Activated CD8-positive, alpha-beta memory T cell treated with anti-CD3 and anti-CD28 coated beads, Interleukin-2, amount 10 ng/mL, durations not matched to agents 7 days and 5 days (primary cell): ENCODE measurements at regions of chr2 and their contacts with region 1.

Region 1: GRCh38 chr2:191150600-191151330 is at the start of gene STAT4:
- DNase-seq: peak; percentile 92
- ATAC-seq: peak; percentile 84
- H3K4me3 Mint-ChIP-seq: peak within 1 kb of the TSS; percentile 94
- H3K27ac Mint-ChIP-seq: peak within 1 kb of the TSS; percentile 95
- H3K4me1 Mint-ChIP-seq: peaks cover 69% of the 10 kb centered on the region
- H3K27me3 Mint-ChIP-seq: no peaks in the 10 kb centered on the region
- total RNA-seq, gene STAT4: 101 to 109 TPM

Region 2: DNA sequence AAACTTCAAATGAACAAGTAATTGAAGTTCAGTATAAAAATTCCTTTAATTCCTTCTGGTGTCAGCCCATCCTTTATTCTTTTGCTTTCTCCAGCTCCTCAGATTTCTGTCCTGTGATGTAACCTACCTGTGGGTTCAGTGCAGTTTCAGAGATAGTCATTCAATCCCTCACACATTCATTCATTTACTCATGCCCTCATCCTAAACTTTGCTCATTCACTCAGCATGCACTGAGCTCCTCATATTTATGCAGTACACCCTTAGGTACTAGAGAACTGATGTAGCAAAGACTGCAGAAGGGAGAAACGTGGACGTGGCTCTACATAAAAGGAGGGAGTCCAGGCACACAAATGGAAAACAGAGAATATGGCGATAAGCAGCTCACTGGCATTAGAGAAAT is 91.5 kb before region 1 on chr2:
- CTCF ChIA-PET with region 1: interaction called, 369 read pairs
- DNase-seq: no peak
- ATAC-seq: no peak
- H3K4me3 Mint-ChIP-seq: no peak overlapping the region
- H3K27ac Mint-ChIP-seq: peak overlapping the region; percentile 3
- H3K4me1 Mint-ChIP-seq: peaks cover 70% of the 10 kb centered on the region
- H3K27me3 Mint-ChIP-seq: no peaks in the 10 kb centered on the region

Region 3: DNA sequence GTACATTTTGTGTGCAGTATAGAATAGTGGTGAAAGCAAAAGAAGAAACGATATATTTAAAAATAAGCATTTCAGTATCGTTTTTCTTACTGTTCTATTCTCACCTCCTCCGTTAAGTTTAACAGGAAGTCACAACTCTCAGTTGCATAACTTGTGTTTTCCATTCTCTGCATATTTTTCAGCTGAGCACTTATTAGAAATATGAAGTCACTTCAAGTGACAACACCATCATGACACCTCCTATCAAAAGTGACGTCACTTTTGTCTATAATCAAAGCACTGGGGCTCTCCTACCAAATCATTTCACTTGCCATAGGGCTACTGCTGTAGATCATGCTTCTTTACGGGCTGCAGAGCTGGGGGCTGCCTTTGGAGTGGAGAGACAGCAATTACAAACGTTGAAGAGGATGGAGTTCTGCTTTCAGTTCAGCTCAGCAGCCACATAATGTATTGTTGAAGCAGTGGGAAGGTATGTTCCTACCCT is 36.3 kb before region 1 on chr2:
- CTCF ChIA-PET with region 1: interaction called, 13 read pairs
- DNase-seq: peak; percentile 72
- ATAC-seq: peak; percentile 43
- H3K4me3 Mint-ChIP-seq: peak overlapping the region; percentile 71
- H3K27ac Mint-ChIP-seq: peak overlapping the region; percentile 98
- H3K4me1 Mint-ChIP-seq: peaks cover 72% of the 10 kb centered on the region
- H3K27me3 Mint-ChIP-seq: no peaks in the 10 kb centered on the region

Region 4: GRCh38 chr2:191165176-191165643 is 14.4 kb after region 1 on chr2:
- CTCF ChIA-PET with region 1: interaction called, 26 read pairs
- DNase-seq: peak; percentile 50
- ATAC-seq: peak; percentile 84
- H3K4me3 Mint-ChIP-seq: no peak overlapping the region
- H3K27ac Mint-ChIP-seq: no peak overlapping the region
- H3K4me1 Mint-ChIP-seq: peaks cover 13% of the 10 kb centered on the region
- H3K27me3 Mint-ChIP-seq: peaks cover 4% of the 10 kb centered on the region

Region 5: DNA sequence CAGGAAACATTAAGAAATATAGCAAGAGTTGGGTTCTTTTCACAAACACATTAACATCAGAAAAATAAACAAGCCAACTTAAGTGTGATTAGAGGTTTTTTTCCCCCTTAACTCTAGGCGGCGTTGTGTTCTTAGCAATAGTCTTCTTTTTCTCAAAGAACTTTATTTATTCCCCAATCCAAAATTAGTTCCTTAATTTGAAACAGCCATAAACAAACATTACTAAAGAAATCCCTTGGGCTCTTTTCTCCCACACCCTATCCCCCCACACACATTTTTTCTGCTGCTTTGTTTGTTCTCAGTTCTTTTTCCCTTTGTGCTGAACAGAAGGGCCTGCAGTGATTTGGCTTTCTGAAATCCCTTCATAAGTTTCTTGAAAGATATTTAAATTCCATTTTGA is 81.2 kb after region 1 on chr2:
- CTCF ChIA-PET with region 1: no interaction called
- DNase-seq: no peak
- ATAC-seq: no peak
- H3K4me3 Mint-ChIP-seq: no peak overlapping the region
- H3K27ac Mint-ChIP-seq: no peak overlapping the region
- H3K4me1 Mint-ChIP-seq: no peaks in the 10 kb centered on the region
- H3K27me3 Mint-ChIP-seq: no peaks in the 10 kb centered on the region